ENCODE measurements at regions of chr6 and their contacts with region 1.

Region 1: GRCh38 chr6:25717866-25718740 is 36.4 kb upstream of the SLC17A4 start:
- DNase-seq: no peak
- ATAC-seq: no peak
- H3K4me3 Mint-ChIP-seq: no peak overlapping the region
- H3K27ac Mint-ChIP-seq: no peak overlapping the region
- H3K4me1 Mint-ChIP-seq: no peaks in the 10 kb centered on the region
- H3K27me3 Mint-ChIP-seq: peaks cover 19% of the 10 kb centered on the region

Region 2: GRCh38 chr6:25703005-25703404 is 15.1 kb before region 1 on chr6:
- CTCF ChIA-PET with region 1: interaction called, 12 read pairs
- POLR2A ChIA-PET with region 1: no interaction called
- DNase-seq: no peak
- ATAC-seq: no peak
- H3K4me3 Mint-ChIP-seq: no peak overlapping the region
- H3K27ac Mint-ChIP-seq: no peak overlapping the region
- H3K4me1 Mint-ChIP-seq: no peaks in the 10 kb centered on the region
- H3K27me3 Mint-ChIP-seq: peaks cover 23% of the 10 kb centered on the region

Region 3: GRCh38 chr6:25942561-25943147 is 224.6 kb after region 1 on chr6:
- CTCF ChIA-PET with region 1: interaction called, 18 read pairs
- POLR2A ChIA-PET with region 1: no interaction called
- DNase-seq: no peak
- ATAC-seq: peak; percentile 68
- H3K4me3 Mint-ChIP-seq: no peak overlapping the region
- H3K27ac Mint-ChIP-seq: no peak overlapping the region
- H3K4me1 Mint-ChIP-seq: peaks cover 21% of the 10 kb centered on the region
- H3K27me3 Mint-ChIP-seq: peaks cover 9% of the 10 kb centered on the region

Region 4: GRCh38 chr6:26003102-26003694 is 285.1 kb after region 1 on chr6:
- CTCF ChIA-PET with region 1: interaction called, 11 read pairs
- POLR2A ChIA-PET with region 1: no interaction called
- DNase-seq: peak; percentile 61
- ATAC-seq: peak; percentile 44
- H3K4me3 Mint-ChIP-seq: no peak overlapping the region
- H3K27ac Mint-ChIP-seq: no peak overlapping the region
- H3K4me1 Mint-ChIP-seq: peaks cover 8% of the 10 kb centered on the region
- H3K27me3 Mint-ChIP-seq: no peaks in the 10 kb centered on the region

Measured in activated CD8-positive, alpha-beta T cell treated with anti-CD3 and anti-CD28 coated beads, Interleukin-2, amount 10 ng/mL, durations not matched to agents 7 days and 5 days (primary cell).